ENCODE measurements at regions of chr15 and their contacts with region 1.

Region 1: DNA sequence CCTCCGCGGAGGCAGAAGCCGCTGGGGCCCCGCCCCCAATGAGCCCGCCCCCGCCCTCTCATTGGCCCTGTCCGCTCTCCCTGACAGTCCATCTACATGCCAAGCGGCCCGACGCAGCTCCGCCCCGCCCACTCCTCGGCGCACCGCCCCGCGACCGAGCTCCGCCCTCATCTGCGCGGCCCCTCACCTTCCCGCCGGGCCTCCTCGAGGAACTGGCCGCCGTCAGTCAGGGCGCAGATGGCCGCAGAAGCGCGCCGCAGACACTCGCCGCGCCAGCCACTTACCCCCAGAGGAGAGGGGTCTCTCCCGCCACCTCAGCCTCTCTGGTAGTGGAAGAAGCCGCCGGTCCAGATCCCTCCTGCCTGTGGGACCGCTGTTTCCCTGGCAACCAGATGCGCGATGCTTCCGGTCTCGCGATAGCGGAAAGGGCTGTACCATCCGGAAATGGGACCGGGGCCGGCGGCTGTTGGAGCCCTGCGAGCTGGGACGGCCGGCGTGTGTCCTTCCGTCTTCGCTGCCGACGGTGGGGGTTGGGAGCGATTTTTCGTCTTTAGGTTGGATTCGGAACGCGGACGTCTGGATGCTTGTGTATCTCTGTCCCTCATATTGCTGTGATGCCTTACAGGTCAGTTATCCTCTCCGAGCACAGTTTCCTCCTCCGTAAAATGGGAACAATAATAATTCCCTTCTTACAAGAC is at the start of gene FSIP1:
- DNase-seq: peak; percentile 96
- H3K4me3 ChIP-seq: peak within 1 kb of the TSS; percentile 76 to 93 (median 93)
- H3K27ac ChIP-seq: peak within 1 kb of the TSS; percentile 74
- H3K4me1 ChIP-seq: peaks cover 21% of the 10 kb centered on the region
- H3K27me3 ChIP-seq: no peaks in the 10 kb centered on the region
- CTCF ChIP-seq: no peak
- total RNA-seq, gene FSIP1: 3.6 to 3.8 TPM

Region 2: DNA sequence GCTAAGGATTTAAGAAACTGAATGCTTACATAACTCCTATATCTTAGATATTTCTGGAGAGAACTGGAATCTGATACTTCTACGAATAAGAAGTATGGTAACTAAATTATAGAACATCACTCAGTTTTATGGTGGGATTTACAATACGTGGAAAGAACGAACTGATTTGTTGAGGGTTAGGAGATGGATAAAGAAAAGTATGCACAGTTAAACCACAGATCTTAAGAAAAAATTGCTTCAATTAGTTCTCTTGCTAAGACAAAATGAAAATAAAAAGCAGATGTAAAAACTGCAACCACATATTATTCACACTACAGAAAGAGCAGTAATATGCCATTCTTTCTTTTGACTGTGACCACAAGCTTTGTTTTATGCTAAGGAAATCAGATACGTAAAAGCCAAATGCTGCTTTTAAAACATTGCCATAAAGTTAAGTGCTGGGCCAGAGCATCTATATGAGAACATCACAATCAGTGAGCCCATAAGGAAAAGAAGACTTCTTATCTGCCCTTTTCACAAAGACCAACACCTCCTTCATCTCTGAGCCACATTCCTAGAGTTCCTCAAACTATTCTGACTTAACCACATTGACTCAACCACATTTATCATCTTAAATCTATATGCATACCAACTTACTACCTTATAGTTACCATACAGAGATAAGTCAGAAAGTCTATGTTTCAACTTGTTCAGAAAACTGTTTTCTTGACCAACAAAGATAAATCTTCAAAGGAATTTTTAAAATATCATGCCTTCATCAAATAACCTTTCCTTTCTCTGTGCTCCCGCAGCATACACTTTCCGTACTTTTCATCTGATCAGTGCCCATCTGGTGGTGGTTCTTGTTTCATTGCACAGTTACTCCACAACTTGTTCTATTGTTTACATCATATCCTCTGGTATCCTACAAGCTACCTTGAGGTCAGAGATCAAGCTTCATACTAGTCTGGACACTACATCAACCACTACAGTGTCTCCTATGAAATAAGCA is 61.7 kb before region 1 on chr15:
- CTCF ChIA-PET with region 1: no interaction called
- dilution Hi-C with region 1: loop called (anchors 5 kb)
- in situ Hi-C with region 1: no loop called
- intact Hi-C with region 1: no loop called
- DNase-seq: peak; percentile 77
- H3K4me3 ChIP-seq: no peak overlapping the region
- H3K27ac ChIP-seq: no peak overlapping the region
- H3K4me1 ChIP-seq: peaks cover 25% of the 10 kb centered on the region
- H3K27me3 ChIP-seq: no peaks in the 10 kb centered on the region
- CTCF ChIP-seq: no peak

Region 3: DNA sequence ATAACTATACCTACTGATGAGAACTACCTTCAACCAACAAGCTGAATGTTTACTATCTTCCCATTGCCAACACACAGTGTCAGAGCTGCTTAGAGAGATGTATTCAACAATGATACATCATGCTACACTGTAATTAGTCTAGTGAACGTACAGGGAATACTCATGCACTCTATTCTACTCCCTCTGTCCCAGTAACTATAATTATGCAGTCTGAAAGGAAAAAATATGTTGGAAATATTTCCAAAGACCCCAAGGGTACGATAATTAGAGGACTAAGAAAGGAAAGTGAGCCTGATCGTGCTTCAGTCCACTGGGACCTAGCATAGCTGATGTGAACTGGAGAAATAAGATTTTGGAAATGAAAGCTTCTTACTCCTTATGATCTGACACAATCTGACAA is 36.9 kb after region 1 on chr15:
- CTCF ChIA-PET with region 1: no interaction called
- dilution Hi-C with region 1: no loop called
- in situ Hi-C with region 1: no loop called
- intact Hi-C with region 1: no loop called
- DNase-seq: no peak
- H3K4me3 ChIP-seq: no peak overlapping the region
- H3K27ac ChIP-seq: no peak overlapping the region
- H3K4me1 ChIP-seq: no peaks in the 10 kb centered on the region
- H3K27me3 ChIP-seq: no peaks in the 10 kb centered on the region
- CTCF ChIP-seq: no peak

Region 4: DNA sequence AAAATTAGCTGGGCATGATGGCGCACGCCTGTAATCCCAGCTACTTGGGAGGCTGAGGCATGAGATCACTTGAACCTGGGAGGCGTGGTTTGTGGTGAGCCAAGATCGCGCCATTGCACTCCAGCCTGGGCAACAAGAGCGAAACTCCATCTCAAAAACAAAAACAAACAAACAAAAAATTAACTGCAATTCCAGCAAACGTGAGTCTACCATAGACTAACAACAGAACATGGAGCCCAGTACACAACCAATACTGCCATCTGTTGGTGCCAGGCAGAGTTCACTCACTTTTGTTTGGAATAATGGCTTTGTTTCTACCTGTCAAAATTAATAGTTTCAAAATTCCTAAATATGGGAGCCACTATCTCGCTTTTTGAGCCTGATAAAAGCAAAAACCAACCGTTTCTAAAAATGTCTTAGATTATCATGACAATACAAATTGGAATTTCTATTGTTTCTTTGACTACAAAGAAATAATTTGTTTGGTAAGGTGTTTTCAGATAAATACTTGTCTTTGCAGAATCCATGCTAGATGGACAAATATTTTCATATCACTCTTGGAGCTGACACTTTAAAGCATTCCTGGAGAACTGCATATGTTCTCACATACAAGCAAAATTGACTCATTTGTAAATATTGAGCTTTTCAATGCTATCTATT is 92.4 kb after region 1 on chr15:
- CTCF ChIA-PET with region 1: interaction called, 3 read pairs
- dilution Hi-C with region 1: no loop called
- in situ Hi-C with region 1: loop called (anchors 5 kb)
- intact Hi-C with region 1: loop called (anchors 1 kb)
- DNase-seq: peak; percentile 36
- H3K4me3 ChIP-seq: no peak overlapping the region
- H3K27ac ChIP-seq: no peak overlapping the region
- H3K4me1 ChIP-seq: peaks cover 11% of the 10 kb centered on the region
- H3K27me3 ChIP-seq: no peaks in the 10 kb centered on the region
- CTCF ChIP-seq: peak; percentile 61 to 70

Region 5: GRCh38 chr15:39976291-39977274 is 194.0 kb after region 1 on chr15:
- CTCF ChIA-PET with region 1: no interaction called
- dilution Hi-C with region 1: no loop called
- in situ Hi-C with region 1: loop called in 1 of 2 experiments (anchors 25 kb)
- intact Hi-C with region 1: loop called (anchors 1 kb)
- DNase-seq: peak; percentile 39
- H3K4me3 ChIP-seq: peak overlapping the region; percentile 4 to 51 (median 46)
- H3K27ac ChIP-seq: peak overlapping the region; percentile 14
- H3K4me1 ChIP-seq: peaks cover 13% of the 10 kb centered on the region
- H3K27me3 ChIP-seq: no peaks in the 10 kb centered on the region
- CTCF ChIP-seq: peak; percentile 22 to 55

Region 6: GRCh38 chr15:40108855-40109735 is 326.5 kb after region 1 on chr15 and contains the start of gene BMF:
- CTCF ChIA-PET with region 1: no interaction called
- dilution Hi-C with region 1: no loop called
- in situ Hi-C with region 1: no loop called
- intact Hi-C with region 1: loop called (anchors 10 kb)
- DNase-seq: peak; percentile 97
- H3K4me3 ChIP-seq: peak within 1 kb of the TSS; percentile 55 to 72 (median 67)
- H3K27ac ChIP-seq: no peak within 1 kb of the TSS
- H3K4me1 ChIP-seq: peaks cover 26% of the 10 kb centered on the region
- H3K27me3 ChIP-seq: no peaks in the 10 kb centered on the region
- CTCF ChIP-seq: peak in 1 of 2 donors; percentile 35
- total RNA-seq, gene BMF: 1.5 to 2.2 TPM

Region 7: GRCh38 chr15:40274350-40275274 is 492.0 kb after region 1 on chr15:
- CTCF ChIA-PET with region 1: no interaction called
- dilution Hi-C with region 1: no loop called
- in situ Hi-C with region 1: no loop called
- intact Hi-C with region 1: loop called (anchors 10 kb)
- DNase-seq: peak; percentile 60
- H3K4me3 ChIP-seq: no peak overlapping the region
- H3K27ac ChIP-seq: no peak overlapping the region
- H3K4me1 ChIP-seq: no peaks in the 10 kb centered on the region
- H3K27me3 ChIP-seq: no peaks in the 10 kb centered on the region
- CTCF ChIP-seq: peak; percentile 100

Measured in mammary epithelial cell (primary cell).